BJ (cell line): ENCODE measurements at regions of chr15 and their contacts with region 1.

Region 1: DNA sequence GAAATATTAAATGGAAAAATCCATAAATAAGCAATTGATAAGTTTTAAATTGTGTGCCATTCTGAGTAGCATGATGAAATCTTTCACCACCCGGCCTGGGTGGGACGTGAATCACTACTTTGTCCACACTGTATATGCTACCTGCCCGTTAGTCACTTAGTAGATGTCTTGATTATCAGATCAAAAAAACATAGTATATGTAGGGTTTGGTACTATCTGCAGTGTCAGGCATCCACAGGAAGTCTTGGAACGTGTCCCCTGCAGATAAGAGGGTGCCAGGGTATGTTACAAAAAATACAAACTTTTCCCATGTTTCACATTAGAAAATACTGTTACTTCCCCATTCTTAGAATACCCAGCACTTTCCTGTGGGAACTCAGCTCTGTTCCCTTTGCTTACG is 35.2 kb downstream of the FAM81A start:
- DNase-seq: no peak
- H3K4me3 ChIP-seq: no peak overlapping the region
- H3K27me3 ChIP-seq: no peaks in the 10 kb centered on the region; the same call in 1 of the 2 replicates
- CTCF ChIP-seq: no peak

Region 2: DNA sequence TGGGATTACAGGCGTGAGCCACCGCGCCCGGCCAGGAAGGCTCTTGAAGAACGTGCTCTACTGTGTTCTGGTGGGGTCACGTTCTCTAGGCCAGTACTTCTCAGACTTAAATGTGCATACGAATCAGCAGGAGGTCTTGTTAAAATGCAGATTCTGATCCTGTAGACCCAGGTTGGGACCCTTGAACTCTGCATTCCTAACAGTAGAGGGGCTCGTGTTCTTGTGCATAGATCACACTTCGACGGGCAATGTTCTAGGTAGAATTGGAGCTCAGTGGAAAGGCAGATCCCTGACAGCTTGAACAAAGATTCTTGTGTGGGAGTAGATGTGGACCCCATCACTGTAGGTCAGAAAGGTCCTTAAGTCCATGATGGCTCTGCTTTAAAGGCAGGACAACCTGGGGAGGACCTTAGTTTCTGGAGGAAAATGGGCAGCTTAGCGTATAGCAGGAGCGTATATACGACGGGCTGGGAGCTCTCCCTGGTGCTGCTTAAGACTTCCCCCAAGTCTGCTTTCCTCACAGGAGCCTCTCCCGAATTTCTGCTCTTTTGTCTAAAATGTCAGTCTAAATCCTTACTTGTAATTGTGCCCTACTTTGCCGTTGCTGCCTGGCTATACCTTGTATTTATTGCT is 52.1 kb before region 1 on chr15:
- CTCF ChIA-PET with region 1: no interaction called
- POLR2A ChIA-PET with region 1: interaction called, 14 read pairs
- DNase-seq: no peak
- H3K4me3 ChIP-seq: no peak overlapping the region
- H3K27me3 ChIP-seq: peaks cover 11% of the 10 kb centered on the region
- CTCF ChIP-seq: no peak